ENCODE measurements at regions of chr6 and their contacts with region 1.

Region 1: GRCh38 chr6:7910654-7911344 is at the start of gene TXNDC5:
- DNase-seq: peak; percentile 68
- H3K4me3 Mint-ChIP-seq: peak within 1 kb of the TSS; percentile 87
- H3K27ac Mint-ChIP-seq: peak within 1 kb of the TSS; percentile 64
- H3K4me1 Mint-ChIP-seq: peaks cover 20% of the 10 kb centered on the region
- H3K27me3 Mint-ChIP-seq: no peaks in the 10 kb centered on the region
- total RNA-seq, gene TXNDC5: 119 and 121 TPM in 2 replicates

Region 2: GRCh38 chr6:7312616-7313504 is 597.9 kb before region 1 on chr6 and contains the start of gene SSR1:
- intact Hi-C with region 1: loop called (anchors 5 kb)
- DNase-seq: peak; percentile 95
- H3K4me3 Mint-ChIP-seq: peak within 1 kb of the TSS; percentile 98
- H3K27ac Mint-ChIP-seq: peak within 1 kb of the TSS; percentile 94
- H3K4me1 Mint-ChIP-seq: peaks cover 35% of the 10 kb centered on the region
- H3K27me3 Mint-ChIP-seq: no peaks in the 10 kb centered on the region
- total RNA-seq, gene SSR1: 160 and 168 TPM in 2 replicates

Region 3: DNA sequence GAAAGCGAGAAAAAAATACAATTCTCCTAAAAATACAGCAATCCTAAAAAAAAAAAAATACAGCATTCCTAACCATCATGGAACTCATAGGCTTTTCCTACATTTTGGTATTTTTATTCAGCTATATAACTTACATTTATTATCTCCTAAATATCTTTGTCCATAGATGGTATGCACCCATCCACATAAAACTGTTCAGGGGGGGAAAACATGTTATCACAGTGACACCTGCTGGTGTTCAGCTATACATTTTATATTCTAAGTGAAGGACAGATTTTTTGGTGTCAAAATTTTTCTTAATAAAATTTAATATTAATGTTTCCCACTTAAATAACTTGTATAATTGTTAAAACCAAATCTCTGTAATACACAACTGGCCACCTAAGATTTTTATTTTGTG is 95.4 kb after region 1 on chr6:
- intact Hi-C with region 1: loop called (anchors 5 kb)
- DNase-seq: no peak
- H3K4me3 Mint-ChIP-seq: no peak overlapping the region
- H3K27ac Mint-ChIP-seq: no peak overlapping the region
- H3K4me1 Mint-ChIP-seq: no peaks in the 10 kb centered on the region
- H3K27me3 Mint-ChIP-seq: peaks cover 3% of the 10 kb centered on the region

Region 4: DNA sequence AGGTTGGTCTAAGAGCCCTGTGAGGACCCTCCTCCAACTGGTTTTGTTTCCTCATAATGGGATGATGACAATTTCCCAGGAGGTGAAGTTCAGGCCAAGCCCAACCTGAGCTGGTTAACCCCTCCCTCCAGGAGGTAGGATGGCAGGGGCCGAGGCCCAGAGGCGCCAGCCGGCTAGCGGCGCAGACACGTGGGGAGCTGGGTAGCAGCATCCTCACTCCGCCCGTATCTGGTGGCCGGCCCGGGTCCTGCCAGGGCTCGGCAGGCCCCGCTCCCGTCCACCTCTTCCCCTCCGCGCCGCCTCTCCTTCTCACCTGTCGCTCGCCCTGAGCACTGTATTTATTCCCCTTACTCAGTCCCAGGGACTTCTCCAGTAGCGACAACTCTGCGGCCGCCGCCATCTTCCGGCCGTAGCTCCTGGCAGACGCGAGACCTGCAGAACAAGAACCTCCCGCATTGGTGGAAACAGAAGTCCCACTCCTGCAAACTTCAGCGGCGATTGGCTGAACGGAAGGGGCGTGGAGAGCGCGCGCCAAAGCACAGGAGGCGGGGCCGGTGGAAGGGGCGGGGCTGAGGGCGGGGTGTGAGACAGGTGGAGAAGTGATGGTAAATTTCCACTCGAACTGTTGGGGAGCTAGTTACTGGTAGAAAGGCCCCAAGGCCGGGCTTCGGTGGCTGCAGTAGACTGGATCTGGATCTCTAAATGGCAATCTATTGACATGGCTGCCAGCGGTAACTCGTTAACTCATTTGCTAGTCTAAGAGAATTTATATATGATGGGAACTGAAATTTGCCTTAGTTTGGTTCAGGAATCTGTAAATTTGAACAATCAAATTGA is 191.5 kb after region 1 on chr6 and contains the start of gene EEF1E1:
- intact Hi-C with region 1: loop called (anchors 1 kb)
- DNase-seq: peak; percentile 87
- H3K4me3 Mint-ChIP-seq: peak within 1 kb of the TSS; percentile 92
- H3K27ac Mint-ChIP-seq: peak within 1 kb of the TSS; percentile 97
- H3K4me1 Mint-ChIP-seq: peaks cover 34% of the 10 kb centered on the region
- H3K27me3 Mint-ChIP-seq: peaks cover 4% of the 10 kb centered on the region
- total RNA-seq, gene EEF1E1: 92.8 and 99.8 TPM in 2 replicates

Region 5: GRCh38 chr6:8219352-8219943 is 308.6 kb after region 1 on chr6:
- intact Hi-C with region 1: loop called (anchors 5 kb)
- DNase-seq: peak; percentile 5
- H3K4me3 Mint-ChIP-seq: no peak overlapping the region
- H3K27ac Mint-ChIP-seq: no peak overlapping the region
- H3K4me1 Mint-ChIP-seq: no peaks in the 10 kb centered on the region
- H3K27me3 Mint-ChIP-seq: no peaks in the 10 kb centered on the region

Measured in activated T-helper 1 cell treated with anti-CD3 and anti-CD28 coated beads, Interleukin-12 subunit alpha, Interleukin-12 subunit beta, Interleukin-2, Interleukin-4 antibody, amounts not matched to agents 30 ng/mL and 10 ng/mL and 1 ng/mL, durations not matched to agents 14 hours and 24 hours and 36 hours (primary cell).